OCI-LY7 (cell line): ENCODE measurements at regions of chr2 and their contacts with region 1.

Region 1: GRCh38 chr2:173990970-173991819 is 26.0 kb upstream of the SP3 start:
- DNase-seq: peak; percentile 60
- H3K4me3 ChIP-seq: peak overlapping the region; percentile 1
- H3K27ac ChIP-seq: peak overlapping the region; percentile 24
- H3K4me1 ChIP-seq: peaks cover 51% of the 10 kb centered on the region
- CTCF ChIP-seq: no peak

Region 2: DNA sequence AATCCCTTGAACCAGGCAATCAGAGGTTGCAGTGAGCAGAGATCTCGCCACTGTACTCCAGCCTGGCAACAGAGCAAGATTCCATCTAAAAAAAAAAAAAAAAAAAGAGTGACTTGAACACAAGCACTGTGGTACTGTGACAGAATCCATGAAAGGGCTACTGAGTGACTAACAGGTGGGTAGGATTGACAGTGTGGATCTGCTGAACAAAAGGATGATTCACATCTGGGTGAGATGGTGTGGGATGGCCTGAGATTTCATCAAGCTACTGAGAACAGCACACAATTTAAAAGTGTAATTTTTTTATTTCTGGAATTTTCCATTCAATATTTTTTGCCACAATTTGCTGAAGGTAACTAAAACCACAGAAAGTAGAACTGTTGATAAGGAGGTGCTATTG is 12.7 kb before region 1 on chr2:
- CTCF ChIA-PET with region 1: no interaction called
- POLR2A ChIA-PET with region 1: interaction called, 19 read pairs
- intact Hi-C with region 1: no loop called
- DNase-seq: no peak
- H3K4me3 ChIP-seq: no peak overlapping the region
- H3K27ac ChIP-seq: no peak overlapping the region
- H3K4me1 ChIP-seq: no peaks in the 10 kb centered on the region
- CTCF ChIP-seq: no peak

Region 3: GRCh38 chr2:174078275-174078674 is 87.1 kb after region 1 on chr2:
- CTCF ChIA-PET with region 1: no interaction called
- POLR2A ChIA-PET with region 1: no interaction called
- intact Hi-C with region 1: no loop called
- DNase-seq: no peak
- H3K4me3 ChIP-seq: no peak overlapping the region
- H3K27ac ChIP-seq: no peak overlapping the region
- H3K4me1 ChIP-seq: no peaks in the 10 kb centered on the region
- CTCF ChIP-seq: peak; percentile 80

Region 4: DNA sequence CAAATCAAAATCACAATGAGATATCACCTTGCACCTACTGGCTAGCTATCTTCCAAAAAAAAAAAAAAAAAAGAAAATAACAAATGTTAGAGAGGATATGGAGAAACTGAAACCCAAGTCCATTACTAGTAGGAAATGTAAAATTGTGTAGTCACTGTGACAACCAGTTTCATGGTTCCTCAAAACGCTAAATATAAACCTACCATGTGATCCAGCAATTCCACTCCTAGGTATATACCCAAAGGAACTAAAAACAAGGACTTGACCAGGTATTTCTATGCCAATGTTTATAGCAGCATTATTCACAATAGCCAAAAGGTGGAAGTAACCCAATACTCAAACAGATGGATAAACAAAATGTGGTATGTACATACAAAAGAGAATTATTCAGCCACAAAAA is 392.6 kb after region 1 on chr2:
- CTCF ChIA-PET with region 1: no interaction called
- POLR2A ChIA-PET with region 1: no interaction called
- intact Hi-C with region 1: no loop called
- DNase-seq: no peak
- H3K4me3 ChIP-seq: no peak overlapping the region
- H3K27ac ChIP-seq: no peak overlapping the region
- H3K4me1 ChIP-seq: no peaks in the 10 kb centered on the region
- CTCF ChIP-seq: no peak